Right cardiac atrium (tissue), 5 donors: ENCODE measurements at regions of chr16 and their contacts with region 1.

Region 1: GRCh38 chr16:11774065-11774626 is 22.9 kb downstream of the ZC3H7A start:
- DNase-seq: no peak
- ATAC-seq: no peak
- H3K4me3 ChIP-seq: no peak overlapping the region
- H3K27ac ChIP-seq: no peak overlapping the region
- H3K4me1 ChIP-seq: no peaks in the 10 kb centered on the region
- H3K27me3 ChIP-seq: no peaks in the 10 kb centered on the region

Region 2: DNA sequence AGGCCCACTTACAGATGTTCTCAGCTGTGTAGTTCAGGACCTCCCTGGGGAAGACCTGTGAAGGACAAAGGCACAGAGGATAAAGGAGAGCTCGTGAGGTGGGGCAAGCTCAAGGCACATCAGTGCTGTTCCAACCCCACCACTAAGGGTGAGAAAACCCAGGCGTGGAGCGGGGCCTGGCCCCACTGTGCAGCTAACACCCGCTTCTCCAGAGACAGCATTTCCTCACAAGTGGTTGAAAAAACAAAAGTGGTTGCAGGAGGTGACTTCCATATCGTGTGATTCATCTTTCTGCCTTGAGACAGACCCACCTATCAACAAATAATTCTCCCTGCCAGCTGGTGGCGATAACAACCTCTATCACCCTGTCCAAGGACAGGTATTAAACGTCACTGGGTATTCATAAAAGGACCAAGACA is 75.9 kb before region 1 on chr16:
- intact Hi-C with region 1: no loop called
- DNase-seq: no peak
- ATAC-seq: no peak
- H3K4me3 ChIP-seq: no peak overlapping the region
- H3K27ac ChIP-seq: no peak overlapping the region
- H3K4me1 ChIP-seq: peaks cover 3% of the 10 kb centered on the region
- H3K27me3 ChIP-seq: no peaks in the 10 kb centered on the region

Region 3: DNA sequence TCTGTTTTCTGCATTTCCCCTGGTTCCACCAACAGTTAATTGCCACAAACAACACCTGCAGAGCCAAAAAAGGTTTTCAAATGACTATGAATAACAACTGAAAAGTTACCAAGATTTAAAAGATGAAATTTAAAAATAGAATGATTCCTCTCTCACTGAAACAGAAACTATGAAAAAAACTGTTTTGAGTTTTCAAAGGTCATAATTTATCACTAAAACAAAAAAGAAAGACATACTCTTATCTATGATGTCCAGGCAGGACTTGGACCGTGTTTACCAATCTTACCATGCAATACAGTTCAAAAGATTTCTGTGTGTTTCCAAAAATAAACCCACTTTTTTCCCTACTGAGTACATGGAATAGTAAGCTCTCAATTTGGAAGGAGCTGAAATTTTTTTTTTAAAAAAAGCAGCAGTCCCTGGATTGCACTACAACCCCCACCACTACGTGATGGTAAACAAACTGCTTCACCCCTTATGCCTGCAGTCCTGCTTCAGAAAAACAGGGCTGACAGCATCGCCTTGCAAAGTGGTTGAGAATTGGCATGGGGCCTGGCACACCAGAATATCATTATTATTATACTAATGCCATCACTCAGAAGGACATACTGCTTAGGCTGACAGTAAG is 40.0 kb before region 1 on chr16:
- intact Hi-C with region 1: no loop called
- DNase-seq: no peak
- ATAC-seq: peak; percentile 18 to 49
- H3K4me3 ChIP-seq: no peak overlapping the region
- H3K27ac ChIP-seq: peak overlapping the region; percentile 36
- H3K4me1 ChIP-seq: peaks cover 2% of the 10 kb centered on the region
- H3K27me3 ChIP-seq: no peaks in the 10 kb centered on the region

Region 4: GRCh38 chr16:11848842-11849241 is 74.7 kb after region 1 on chr16:
- intact Hi-C with region 1: loop called in 1 of 4 experiments (anchors 10 kb)
- DNase-seq: no peak
- ATAC-seq: no peak
- H3K4me3 ChIP-seq: no peak overlapping the region
- H3K27ac ChIP-seq: no peak overlapping the region
- H3K4me1 ChIP-seq: peaks cover 2% of the 10 kb centered on the region
- H3K27me3 ChIP-seq: no peaks in the 10 kb centered on the region